ENCODE measurements at regions of chr19 and their contacts with region 1.

Region 1: GRCh38 chr19:45886427-45887199 is 672 bp upstream of the IRF2BP1 start:
- DNase-seq: peak; percentile 87 to 93 (median 91)
- H3K4me3 ChIP-seq: peak overlapping the region; percentile 65 to 71
- H3K4me3 Mint-ChIP-seq: peak overlapping the region; percentile 94 to 98 (median 98)
- H3K27ac ChIP-seq: peak overlapping the region; percentile 68
- H3K27ac Mint-ChIP-seq: peak overlapping the region; percentile 97 to 99 (median 99)
- H3K4me1 ChIP-seq: peaks cover 40% of the 10 kb centered on the region
- H3K4me1 Mint-ChIP-seq: peaks cover 11 to 36% (median 19%) of the 10 kb centered on the region in 4 donors
- H3K27me3 ChIP-seq: no peaks in the 10 kb centered on the region
- H3K27me3 Mint-ChIP-seq: peaks cover 0 to under 1% of the 10 kb centered on the region in 2 donors

Region 2: DNA sequence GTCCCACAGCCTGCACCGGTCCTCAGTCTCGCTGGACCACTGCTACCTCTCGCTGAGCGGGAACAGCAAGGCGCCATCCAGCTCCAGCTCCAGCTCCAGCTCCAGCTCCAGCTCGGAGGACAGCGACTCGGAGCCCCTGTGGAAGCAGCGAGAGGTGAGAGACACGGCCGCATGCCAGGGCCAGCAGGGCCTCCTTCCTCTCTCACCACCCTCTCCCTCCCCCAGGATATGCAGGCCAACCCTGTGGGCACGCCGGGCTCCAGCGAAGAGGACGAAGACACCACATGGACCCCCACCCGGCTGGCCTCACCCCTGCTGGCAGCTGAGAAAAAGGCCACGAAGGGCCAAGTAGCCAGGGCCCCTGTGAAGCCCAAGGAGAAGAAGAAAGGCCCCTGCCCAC is 124.9 kb before region 1 on chr19:
- CTCF ChIA-PET with region 1: no interaction called
- POLR2A ChIA-PET with region 1: no interaction called
- intact Hi-C with region 1: no loop called
- DNase-seq: no peak
- H3K4me3 ChIP-seq: no peak overlapping the region
- H3K4me3 Mint-ChIP-seq: no peak overlapping the region
- H3K27ac ChIP-seq: no peak overlapping the region
- H3K27ac Mint-ChIP-seq: no peak overlapping the region
- H3K4me1 ChIP-seq: no peaks in the 10 kb centered on the region
- H3K4me1 Mint-ChIP-seq: peaks cover 0 to 1% (median 0%) of the 10 kb centered on the region in 4 donors
- H3K27me3 ChIP-seq: no peaks in the 10 kb centered on the region
- H3K27me3 Mint-ChIP-seq: peaks cover 2 to 8% of the 10 kb centered on the region in 2 donors

Region 3: GRCh38 chr19:46002678-46003275 is 116.2 kb after region 1 on chr19:
- CTCF ChIA-PET with region 1: no interaction called
- POLR2A ChIA-PET with region 1: no interaction called
- intact Hi-C with region 1: no loop called
- DNase-seq: no peak
- H3K4me3 ChIP-seq: no peak overlapping the region
- H3K4me3 Mint-ChIP-seq: no peak overlapping the region
- H3K27ac ChIP-seq: no peak overlapping the region
- H3K27ac Mint-ChIP-seq: no peak overlapping the region
- H3K4me1 ChIP-seq: peaks cover 16% of the 10 kb centered on the region
- H3K4me1 Mint-ChIP-seq: peaks cover 17 to 27% (median 22%) of the 10 kb centered on the region in 4 donors
- H3K27me3 ChIP-seq: no peaks in the 10 kb centered on the region
- H3K27me3 Mint-ChIP-seq: no peaks in the 10 kb centered on the region

Region 4: GRCh38 chr19:47483800-47484690 is 1597.4 kb after region 1 on chr19 and contains the start of gene KPTN:
- CTCF ChIA-PET with region 1: no interaction called
- POLR2A ChIA-PET with region 1: interaction called, 4 read pairs
- intact Hi-C with region 1: loop called (anchors 5 kb)
- DNase-seq: peak; percentile 87 to 92 (median 90)
- H3K4me3 ChIP-seq: peak within 1 kb of the TSS; percentile 44 to 72
- H3K4me3 Mint-ChIP-seq: peak within 1 kb of the TSS; percentile 91 to 100 (median 98)
- H3K27ac ChIP-seq: peak within 1 kb of the TSS; percentile 86
- H3K27ac Mint-ChIP-seq: peak within 1 kb of the TSS; percentile 96 to 100 (median 99)
- H3K4me1 ChIP-seq: peaks cover 21% of the 10 kb centered on the region
- H3K4me1 Mint-ChIP-seq: peaks cover 16 to 42% (median 22%) of the 10 kb centered on the region in 4 donors
- H3K27me3 ChIP-seq: no peaks in the 10 kb centered on the region
- H3K27me3 Mint-ChIP-seq: no peaks in the 10 kb centered on the region
- total RNA-seq, gene KPTN: 4.0 to 4.3 TPM

Measured in CD4-positive, alpha-beta memory T cell (primary cell).